ENCODE measurements at regions of chr3 and their contacts with region 1.

Region 1: GRCh38 chr3:15399970-15400369 is 27.4 kb downstream of the METTL6 start:
- DNase-seq: no peak
- H3K4me3 ChIP-seq: no peak overlapping the region
- H3K27ac ChIP-seq: no peak overlapping the region
- H3K4me1 ChIP-seq: no peaks in the 10 kb centered on the region
- H3K27me3 ChIP-seq: no peaks in the 10 kb centered on the region
- CTCF ChIP-seq: no peak

Region 2: GRCh38 chr3:15215996-15216395 is 184.0 kb before region 1 on chr3:
- intact Hi-C with region 1: loop called (anchors 5 kb)
- DNase-seq: no peak
- H3K4me3 ChIP-seq: no peak overlapping the region
- H3K27ac ChIP-seq: no peak overlapping the region
- H3K4me1 ChIP-seq: peaks cover 0 to 6% of the 10 kb centered on the region in 2 donors
- H3K27me3 ChIP-seq: no peaks in the 10 kb centered on the region
- CTCF ChIP-seq: no peak

Region 3: GRCh38 chr3:15384510-15385237 is 15.3 kb before region 1 on chr3:
- intact Hi-C with region 1: no loop called
- DNase-seq: no peak
- H3K4me3 ChIP-seq: no peak overlapping the region
- H3K27ac ChIP-seq: no peak overlapping the region
- H3K4me1 ChIP-seq: no peaks in the 10 kb centered on the region
- H3K27me3 ChIP-seq: no peaks in the 10 kb centered on the region
- CTCF ChIP-seq: no peak